OCI-LY7 (cell line): ENCODE measurements at regions of chr5 and their contacts with region 1.

Region 1: DNA sequence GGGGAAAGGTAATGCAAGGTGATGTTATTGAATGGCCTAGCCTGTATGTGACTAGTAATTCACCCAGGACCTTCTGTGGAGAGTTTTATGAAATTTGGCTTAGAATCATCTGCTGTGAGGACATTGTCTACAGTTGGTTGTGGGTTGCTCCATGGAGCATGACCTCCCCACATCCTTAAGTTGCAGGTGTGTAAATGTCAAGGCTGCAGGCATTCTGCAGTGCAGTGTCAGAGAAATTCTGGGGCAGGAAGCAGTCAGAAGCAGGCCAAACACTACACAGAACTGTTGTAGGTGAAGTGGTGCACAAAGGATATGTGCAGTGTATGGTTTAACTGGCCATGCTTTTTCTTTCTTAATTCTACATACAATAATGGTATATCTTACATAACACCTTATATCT is 588.3 kb downstream of the EBF1 start:
- DNase-seq: peak; percentile 98
- H3K4me3 ChIP-seq: peak overlapping the region; percentile 27
- H3K27ac ChIP-seq: peak overlapping the region; percentile 95
- H3K4me1 ChIP-seq: peaks cover 47% of the 10 kb centered on the region
- CTCF ChIP-seq: no peak

Region 2: DNA sequence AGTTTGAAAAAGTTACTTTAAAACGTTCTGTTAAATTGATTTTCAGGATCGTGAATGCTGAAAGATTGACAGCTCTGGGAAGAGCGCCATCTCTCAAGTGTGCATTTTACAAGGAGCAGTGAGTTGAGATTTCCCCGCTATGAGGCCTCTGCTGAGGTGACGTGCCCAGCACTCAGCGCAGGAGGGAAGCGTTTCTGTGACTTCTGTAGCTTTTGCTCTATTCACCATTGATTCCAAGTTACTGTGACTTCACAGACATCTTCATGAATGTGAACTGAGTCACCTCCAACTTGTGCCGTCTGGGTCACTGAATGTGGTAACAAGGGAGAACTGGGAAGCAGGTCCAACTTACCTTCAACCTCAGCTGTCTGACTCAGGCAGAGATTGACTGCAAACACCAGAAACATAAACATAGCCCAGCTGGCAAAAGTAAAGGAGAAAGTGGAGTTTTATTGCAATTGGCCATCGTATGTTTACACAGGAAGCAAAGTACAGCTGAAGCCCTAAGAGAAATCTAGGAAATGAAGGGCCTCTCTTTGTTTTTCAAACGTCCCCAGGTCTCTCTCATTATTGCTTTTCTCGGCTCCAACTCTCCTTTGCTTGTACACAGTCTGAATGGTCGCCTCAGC is 223.7 kb before region 1 on chr5:
- CTCF ChIA-PET with region 1: no interaction called
- POLR2A ChIA-PET with region 1: interaction called, 6 read pairs
- intact Hi-C with region 1: loop called (anchors 1 kb)
- DNase-seq: no peak
- H3K4me3 ChIP-seq: no peak overlapping the region
- H3K27ac ChIP-seq: no peak overlapping the region
- H3K4me1 ChIP-seq: peaks cover 22% of the 10 kb centered on the region
- CTCF ChIP-seq: no peak

Region 3: GRCh38 chr5:158435161-158435616 is 76.3 kb before region 1 on chr5:
- CTCF ChIA-PET with region 1: no interaction called
- POLR2A ChIA-PET with region 1: interaction called, 6 read pairs
- intact Hi-C with region 1: loop called (anchors 5 kb)
- DNase-seq: peak; percentile 68
- H3K4me3 ChIP-seq: no peak overlapping the region
- H3K27ac ChIP-seq: peak overlapping the region; percentile 62
- H3K4me1 ChIP-seq: peaks cover 73% of the 10 kb centered on the region
- CTCF ChIP-seq: no peak

Region 4: DNA sequence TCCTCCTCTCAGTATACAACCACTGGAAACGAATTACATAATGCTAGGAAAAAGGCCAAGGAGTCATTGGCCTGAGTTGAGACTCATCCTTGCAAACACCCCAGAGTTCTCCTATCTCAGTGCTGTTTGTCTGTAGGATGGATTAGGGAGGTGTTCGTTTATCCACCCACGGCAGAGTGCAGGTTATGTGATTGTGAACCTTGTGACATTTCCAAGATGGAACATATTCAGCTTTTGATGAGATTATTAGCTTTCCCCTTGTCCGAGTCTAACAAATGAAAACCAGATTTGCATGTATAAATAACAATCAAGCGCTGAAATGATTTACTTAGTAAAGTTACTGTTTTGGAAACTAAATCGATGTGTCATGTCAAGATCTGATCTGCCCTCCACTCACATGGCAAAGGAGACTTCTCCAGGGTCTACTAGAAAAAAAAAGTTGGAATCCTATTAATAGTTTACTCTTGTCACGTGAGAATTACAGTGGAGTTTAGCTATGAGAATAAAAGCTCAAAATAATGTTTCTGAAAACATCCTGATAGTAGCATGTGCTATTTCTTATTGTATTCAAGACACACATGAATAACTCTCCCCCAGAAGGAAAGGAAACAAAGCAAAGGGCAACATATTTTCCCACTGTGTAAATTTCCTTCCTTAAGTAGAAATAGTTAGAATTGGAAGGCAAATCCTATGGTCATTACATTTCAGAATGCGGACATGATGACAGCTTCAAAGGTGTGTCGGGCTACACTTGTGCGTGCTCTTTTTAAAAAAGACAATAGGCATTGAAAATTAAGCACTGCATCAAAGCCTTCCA is 12.2 kb before region 1 on chr5:
- CTCF ChIA-PET with region 1: no interaction called
- POLR2A ChIA-PET with region 1: interaction called, 11 read pairs
- intact Hi-C with region 1: no loop called
- DNase-seq: no peak
- H3K4me3 ChIP-seq: no peak overlapping the region
- H3K27ac ChIP-seq: no peak overlapping the region
- H3K4me1 ChIP-seq: peaks cover 5% of the 10 kb centered on the region
- CTCF ChIP-seq: no peak

Region 5: DNA sequence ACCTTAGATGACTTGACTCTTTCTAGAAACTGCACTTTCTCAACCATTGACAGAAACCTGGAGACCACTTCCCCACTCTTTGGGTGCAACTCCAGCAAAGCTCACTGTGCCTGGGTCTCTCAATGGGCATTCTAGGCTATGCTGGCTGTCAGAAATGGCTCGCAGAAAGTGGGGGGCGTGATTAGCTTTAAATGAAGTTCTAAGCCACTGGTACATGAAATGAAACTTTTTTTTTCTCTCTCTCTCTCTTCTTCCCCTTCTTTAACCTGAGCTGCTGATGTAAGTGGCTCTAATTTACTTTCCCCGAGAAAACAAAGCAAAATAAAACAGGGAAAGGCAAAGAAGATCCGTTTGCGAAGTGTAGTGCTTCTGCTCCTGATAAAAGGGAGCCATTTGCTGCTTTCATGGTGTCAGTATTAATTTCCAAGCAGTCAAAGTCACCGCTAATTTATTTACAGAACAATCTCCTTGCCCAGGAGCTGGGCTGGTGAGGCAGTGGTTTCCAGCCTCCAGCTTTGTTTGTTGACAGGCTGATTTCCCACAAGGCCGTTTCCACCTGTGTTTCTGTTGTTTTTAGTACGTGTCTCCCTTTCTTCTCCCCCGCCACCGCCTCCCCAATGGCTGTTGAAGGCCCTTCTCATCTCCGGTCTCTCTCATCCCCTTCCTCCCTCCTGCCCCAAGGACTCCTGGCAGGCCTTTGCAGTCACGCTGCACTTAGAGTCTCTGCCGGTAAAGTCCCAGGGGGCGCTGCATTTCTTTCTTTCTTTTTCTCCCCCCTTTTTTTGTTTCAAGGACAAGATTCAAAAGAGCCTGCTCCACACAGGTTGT is 165.4 kb after region 1 on chr5:
- CTCF ChIA-PET with region 1: no interaction called
- POLR2A ChIA-PET with region 1: interaction called, 3 read pairs
- intact Hi-C with region 1: loop called (anchors 2 kb)
- DNase-seq: peak; percentile 85
- H3K4me3 ChIP-seq: peak overlapping the region; percentile 48
- H3K27ac ChIP-seq: peak overlapping the region; percentile 73
- H3K4me1 ChIP-seq: peaks cover 30% of the 10 kb centered on the region
- CTCF ChIP-seq: peak; percentile 93